Panc1 (cell line): ENCODE measurements at regions of chr19 and their contacts with region 1.

Region 1: DNA sequence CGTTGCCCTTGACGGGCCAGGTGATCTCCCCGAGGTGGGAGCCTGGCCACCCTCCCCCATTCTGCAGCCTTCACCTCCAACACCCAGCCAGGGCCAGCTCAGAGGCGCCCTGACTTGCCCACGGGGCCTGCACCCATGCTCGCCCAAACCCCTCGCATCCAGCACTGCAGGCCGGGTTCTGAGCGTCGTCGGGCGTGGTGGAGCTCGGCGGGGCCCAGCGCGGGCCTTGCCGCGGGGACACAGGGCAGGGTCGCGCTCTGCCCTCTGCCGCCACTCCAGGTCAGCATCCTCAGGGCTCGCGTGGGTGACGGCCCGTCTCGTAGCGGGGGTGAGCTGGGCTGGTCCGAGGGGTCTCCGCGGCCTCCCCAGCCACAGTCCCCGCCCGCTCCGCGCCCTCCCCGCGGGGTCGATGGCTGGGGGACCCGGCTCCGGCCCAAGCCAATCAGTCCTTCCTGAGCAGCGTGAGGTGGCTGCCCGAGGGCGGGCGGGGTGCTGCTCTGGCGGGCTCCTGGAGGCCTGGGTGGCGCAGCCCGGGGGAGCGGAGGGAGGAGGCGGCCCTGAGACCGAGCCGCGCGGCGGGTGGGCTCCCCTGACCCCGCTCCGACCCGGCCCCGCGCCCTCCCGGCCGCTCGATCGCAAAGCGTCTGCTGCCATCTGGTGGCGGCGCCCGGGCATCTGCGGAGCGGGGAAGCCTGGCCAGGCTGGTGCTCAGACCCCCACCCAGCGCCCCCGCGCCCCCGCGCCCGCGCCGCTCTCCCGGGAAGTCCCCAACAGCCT is 61.4 kb downstream of the CCNE1 start:
- DNase-seq: no peak
- ATAC-seq: peak; percentile 92
- H3K4me3 ChIP-seq: peak overlapping the region; percentile 42 to 49
- H3K27ac ChIP-seq: no peak overlapping the region
- H3K4me1 ChIP-seq: peaks cover 15% of the 10 kb centered on the region
- H3K27me3 ChIP-seq: no peaks in the 10 kb centered on the region
- CTCF ChIP-seq: peak; percentile 98

Region 2: GRCh38 chr19:29771708-29772414 is 101.4 kb before region 1 on chr19:
- CTCF ChIA-PET with region 1: interaction called, 3 read pairs
- POLR2A ChIA-PET with region 1: no interaction called
- in situ Hi-C with region 1: no loop called
- intact Hi-C with region 1: loop called (anchors 5 kb)
- DNase-seq: peak; percentile 28
- ATAC-seq: peak; percentile 91
- H3K4me3 ChIP-seq: no peak overlapping the region
- H3K27ac ChIP-seq: no peak overlapping the region
- H3K4me1 ChIP-seq: peaks cover 8% of the 10 kb centered on the region; the same call in 1 of the 2 replicates
- H3K27me3 ChIP-seq: no peaks in the 10 kb centered on the region
- CTCF ChIP-seq: peak; percentile 97

Region 3: DNA sequence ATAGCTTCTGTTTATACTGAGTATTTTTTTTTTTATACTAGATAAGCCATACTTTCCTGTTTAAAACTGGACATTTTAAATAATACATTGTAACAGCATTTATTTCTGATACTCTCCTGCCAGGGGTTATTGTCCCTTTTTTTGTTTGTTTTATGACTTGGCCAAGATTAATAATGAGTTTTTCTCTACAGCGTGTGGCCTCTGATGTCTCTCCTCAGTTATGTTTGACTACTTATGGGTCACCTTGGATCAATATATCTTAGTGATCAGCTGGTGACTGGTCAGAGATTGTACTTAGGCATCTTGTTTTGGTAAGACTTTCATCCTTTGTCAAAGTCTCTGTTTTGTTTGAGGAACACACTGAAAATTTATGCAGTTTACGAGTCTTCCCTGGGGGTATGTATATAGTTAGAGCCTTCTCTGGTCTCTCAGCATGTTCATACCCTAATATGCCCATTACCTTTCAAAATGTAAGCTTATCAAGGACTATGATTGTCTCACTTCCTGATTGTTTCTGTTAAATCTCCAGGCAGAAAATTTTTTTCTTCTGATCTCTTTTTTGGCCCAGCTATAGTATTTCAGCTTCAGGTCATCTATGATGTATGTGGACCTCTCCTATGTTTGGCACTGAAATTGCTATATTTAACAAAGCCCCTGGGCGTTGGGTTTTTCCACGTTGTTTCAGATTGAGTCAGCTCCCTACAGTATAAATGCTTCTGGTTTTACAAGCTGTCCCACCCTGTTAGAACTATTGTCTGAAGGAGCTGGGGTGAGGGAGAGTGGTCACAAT is 156.7 kb after region 1 on chr19:
- CTCF ChIA-PET with region 1: no interaction called
- POLR2A ChIA-PET with region 1: no interaction called
- in situ Hi-C with region 1: no loop called
- intact Hi-C with region 1: no loop called
- DNase-seq: no peak
- ATAC-seq: 0 out of 2 replicates have a peak, but pooled peaks have one; percentile 38
- H3K4me3 ChIP-seq: no peak overlapping the region
- H3K27ac ChIP-seq: no peak overlapping the region
- H3K4me1 ChIP-seq: no peaks in the 10 kb centered on the region; the same call in 1 of the 2 replicates
- H3K27me3 ChIP-seq: no peaks in the 10 kb centered on the region
- CTCF ChIP-seq: no peak